ENCODE measurements at regions of chr17 and their contacts with region 1.

Region 1: GRCh38 chr17:57084802-57085447 is at the start of gene AKAP1:
- DNase-seq: peak; percentile 94
- H3K4me3 Mint-ChIP-seq: peak within 1 kb of the TSS; percentile 77
- H3K27ac Mint-ChIP-seq: peak within 1 kb of the TSS; percentile 81
- H3K4me1 Mint-ChIP-seq: peaks cover 19% of the 10 kb centered on the region
- H3K27me3 Mint-ChIP-seq: no peaks in the 10 kb centered on the region
- CTCF ChIP-seq: no peak
- total RNA-seq, gene AKAP1: 19.6 and 32.4 TPM in 2 replicates

Region 2: DNA sequence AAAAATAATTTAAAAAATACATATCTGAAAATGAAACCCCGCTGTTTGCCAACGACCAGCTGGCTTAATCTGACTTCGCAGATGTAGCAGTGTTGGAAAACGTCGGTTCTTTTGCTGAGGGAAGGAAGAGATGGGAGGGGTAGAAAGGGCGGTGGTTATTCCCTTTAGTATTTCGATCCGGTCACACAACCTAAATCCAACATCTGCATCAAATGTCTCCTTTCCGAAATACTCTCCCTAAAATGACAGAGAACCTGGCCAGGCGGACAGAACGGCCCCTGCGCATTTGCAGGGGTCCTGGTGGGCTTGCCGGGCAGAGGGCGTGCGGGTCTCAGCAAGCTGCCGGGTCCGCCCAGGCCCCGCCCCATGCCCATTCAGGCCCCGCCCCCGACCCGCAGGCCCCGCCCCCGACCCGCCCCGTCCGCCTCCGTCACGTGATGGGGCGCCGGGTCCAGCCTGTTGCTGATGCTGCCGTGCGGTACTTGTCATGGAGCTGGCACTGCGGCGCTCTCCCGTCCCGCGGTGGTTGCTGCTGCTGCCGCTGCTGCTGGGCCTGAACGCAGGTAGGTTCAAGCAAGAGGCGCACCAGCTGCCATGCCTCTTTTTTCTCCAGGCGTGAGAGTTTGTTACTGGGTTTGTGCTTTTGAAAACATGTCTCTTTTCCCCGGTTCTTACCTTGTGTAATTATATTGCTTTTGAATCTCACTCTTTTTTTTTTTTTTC is 107.1 kb before region 1 on chr17 and contains the start of gene SCPEP1:
- CTCF ChIA-PET with region 1: interaction called, 4 read pairs
- POLR2A ChIA-PET with region 1: interaction called, 77 read pairs
- intact Hi-C with region 1: loop called (anchors 10 kb)
- DNase-seq: peak; percentile 77
- H3K4me3 Mint-ChIP-seq: peak within 1 kb of the TSS; percentile 73
- H3K27ac Mint-ChIP-seq: peak within 1 kb of the TSS; percentile 34
- H3K4me1 Mint-ChIP-seq: peaks cover 31% of the 10 kb centered on the region
- H3K27me3 Mint-ChIP-seq: no peaks in the 10 kb centered on the region
- CTCF ChIP-seq: no peak
- total RNA-seq, gene SCPEP1: 39.2 and 51.4 TPM in 2 replicates

Region 3: GRCh38 chr17:57033295-57033694 is 51.6 kb before region 1 on chr17:
- CTCF ChIA-PET with region 1: interaction called, 4 read pairs
- POLR2A ChIA-PET with region 1: interaction called, 12 read pairs
- intact Hi-C with region 1: no loop called
- DNase-seq: no peak
- H3K4me3 Mint-ChIP-seq: no peak overlapping the region
- H3K27ac Mint-ChIP-seq: no peak overlapping the region
- H3K4me1 Mint-ChIP-seq: peaks cover 12% of the 10 kb centered on the region
- H3K27me3 Mint-ChIP-seq: peaks cover 25% of the 10 kb centered on the region
- CTCF ChIP-seq: no peak

Region 4: GRCh38 chr17:57097832-57098421 is 13.0 kb after region 1 on chr17:
- CTCF ChIA-PET with region 1: interaction called, 6 read pairs
- POLR2A ChIA-PET with region 1: interaction called, 10 read pairs
- intact Hi-C with region 1: no loop called
- DNase-seq: peak; percentile 79
- H3K4me3 Mint-ChIP-seq: no peak overlapping the region
- H3K27ac Mint-ChIP-seq: peak overlapping the region; percentile 2
- H3K4me1 Mint-ChIP-seq: peaks cover 8% of the 10 kb centered on the region
- H3K27me3 Mint-ChIP-seq: no peaks in the 10 kb centered on the region
- CTCF ChIP-seq: no peak